GM18951 (cell line): ENCODE measurements at regions of chr1 and their contacts with region 1.

Region 1: DNA sequence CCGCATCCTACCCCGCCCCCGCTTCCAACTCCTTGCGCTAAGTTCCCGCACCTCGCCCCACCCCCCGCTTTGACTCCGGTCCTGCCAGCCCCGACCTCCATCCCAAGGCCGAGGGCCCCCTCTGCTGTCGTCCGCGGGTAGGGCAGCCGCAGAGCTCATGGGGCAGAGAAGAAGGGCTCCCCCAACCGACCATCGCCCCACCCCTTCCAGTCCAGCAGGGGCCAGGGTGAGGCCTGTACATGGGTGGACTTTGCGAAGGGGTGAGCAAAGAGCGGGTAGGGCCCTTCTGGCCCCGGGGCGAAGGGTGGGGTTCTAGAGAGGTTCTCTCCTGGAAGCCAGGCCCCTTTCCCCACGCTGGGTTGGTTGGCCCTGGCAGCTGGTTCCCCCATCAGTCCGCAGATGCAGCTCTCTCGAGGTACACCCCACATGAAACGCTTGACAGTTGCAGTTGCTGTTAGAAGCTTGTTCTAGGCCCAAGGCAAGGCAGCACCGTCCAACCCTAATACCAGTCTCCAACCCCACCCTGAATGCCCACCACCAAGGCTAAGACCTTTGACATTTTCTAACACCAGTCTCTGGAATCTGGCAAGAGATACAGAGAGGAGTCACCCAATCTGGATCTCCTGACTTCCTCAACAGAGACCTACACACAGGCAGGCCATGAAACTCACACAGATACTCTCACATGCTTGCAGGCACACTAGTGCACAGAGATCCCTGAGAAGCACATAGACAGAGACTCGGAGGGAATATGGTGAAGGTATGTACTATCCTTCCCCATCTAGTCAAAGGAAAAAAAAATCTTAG is 25.3 kb upstream of the ADGRB2 start:
- POLR2A ChIP-seq: no peak

Region 2: DNA sequence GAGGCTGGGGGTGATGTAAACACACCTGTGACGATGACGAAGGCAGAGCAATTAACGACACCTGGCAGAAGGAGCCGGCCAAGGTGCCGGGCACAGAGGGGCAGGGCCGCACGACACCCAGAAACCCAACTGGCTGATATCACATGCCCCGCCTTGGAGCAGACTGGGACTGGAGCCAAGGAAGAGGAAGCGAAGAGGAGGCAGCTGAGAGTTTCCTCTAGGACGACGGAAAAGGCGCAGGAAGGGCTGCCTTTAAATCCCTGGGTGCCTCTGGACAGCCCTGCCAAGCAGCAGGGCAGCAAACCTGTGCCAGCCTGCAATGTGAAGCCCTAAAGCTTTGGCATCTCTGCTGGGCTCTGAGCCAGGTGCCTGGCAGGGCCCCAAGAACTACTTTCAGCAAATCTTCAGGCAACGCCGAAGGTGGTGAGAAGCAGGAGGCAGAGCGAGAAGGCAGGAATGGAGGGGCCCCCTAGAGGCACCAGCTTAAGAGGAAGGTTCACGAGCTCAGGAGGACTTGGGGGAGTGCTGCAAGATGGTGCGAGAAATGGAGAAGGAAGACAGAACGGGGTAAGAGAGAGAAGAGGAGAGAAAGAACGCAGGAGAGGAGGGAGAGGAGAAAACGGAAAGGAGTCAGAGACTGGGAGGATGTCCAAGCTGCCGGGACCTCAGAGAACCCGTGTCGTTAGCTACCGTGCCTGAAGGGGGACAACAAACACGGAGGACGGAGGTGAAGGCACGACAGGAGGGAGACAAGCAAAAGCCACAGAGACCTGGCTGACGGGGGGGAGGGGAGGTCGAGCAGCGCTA is 119.5 kb before region 1 on chr1:
- in situ Hi-C with region 1: loop called (anchors 5 kb)
- POLR2A ChIP-seq: no peak

Region 3: DNA sequence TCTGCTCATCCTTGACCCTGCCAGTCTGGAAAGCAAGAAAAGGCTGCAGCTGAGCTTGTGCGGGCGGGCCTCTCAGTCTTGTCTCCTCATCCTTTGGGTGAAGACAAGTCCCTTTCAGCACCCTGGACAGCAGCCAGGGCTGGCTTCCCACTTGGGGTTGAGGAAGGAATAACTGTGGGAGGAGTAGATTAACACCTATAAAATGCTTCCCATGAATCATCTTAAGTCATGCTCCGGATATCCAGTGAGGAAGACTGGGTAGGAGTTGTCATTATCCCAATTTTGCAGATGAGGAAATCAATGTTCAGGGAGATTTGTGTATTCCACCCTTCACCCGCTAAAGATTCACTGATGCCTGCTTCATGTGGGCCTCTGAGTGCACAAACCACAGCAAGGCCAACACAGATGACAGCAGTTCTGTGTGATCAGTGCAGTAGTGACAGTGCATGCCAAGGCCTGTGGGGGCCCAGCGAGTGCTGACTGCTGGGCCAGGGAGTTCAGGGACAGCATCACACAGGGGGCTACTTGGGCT is 65.6 kb before region 1 on chr1:
- in situ Hi-C with region 1: no loop called
- POLR2A ChIP-seq: no peak